GM12878 (cell line): ENCODE measurements at regions of chr1 and their contacts with region 1.

Region 1: DNA sequence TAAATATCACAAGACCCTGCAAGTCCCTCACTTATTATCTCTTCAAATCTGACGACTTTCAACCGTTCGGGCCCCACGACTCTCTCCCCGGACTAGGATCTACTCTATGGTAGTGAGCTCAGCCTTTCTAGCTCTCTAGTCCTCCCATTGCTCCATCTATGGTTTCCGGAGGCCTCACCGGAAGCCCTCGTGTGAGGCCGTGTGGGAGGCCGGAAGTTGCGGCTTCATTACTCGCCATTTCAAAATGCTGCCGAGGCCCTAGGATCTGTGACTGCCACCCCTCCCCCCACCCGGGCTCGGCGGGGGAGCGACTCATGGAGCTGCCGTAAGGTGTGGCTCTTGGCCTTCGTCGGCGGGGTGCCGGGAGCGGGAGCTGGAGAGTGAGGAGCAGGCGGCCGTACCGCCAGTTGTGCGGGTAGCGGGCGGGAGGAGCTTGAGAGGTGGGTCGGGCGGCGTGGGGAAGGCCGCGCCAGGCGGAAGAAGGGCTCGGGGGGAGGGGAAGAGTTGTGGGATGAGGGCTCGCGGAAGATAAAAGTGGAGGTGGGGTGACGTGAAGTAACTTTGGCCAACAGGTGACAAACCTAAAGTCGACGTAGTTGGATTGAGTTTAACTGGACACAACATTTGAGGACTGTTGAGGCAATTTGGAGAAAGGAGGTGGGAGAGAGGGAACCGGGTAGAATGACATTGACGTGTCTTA is at the start of gene MDM4:
- DNase-seq: peak; percentile 90
- ATAC-seq: peak; percentile 86
- H3K4me3 ChIP-seq: peak within 1 kb of the TSS; percentile 90
- H3K27ac ChIP-seq: peak within 1 kb of the TSS; percentile 81
- H3K4me1 ChIP-seq: peaks cover 44% of the 10 kb centered on the region
- H3K27me3 ChIP-seq: no peaks in the 10 kb centered on the region
- CTCF ChIP-seq: no peak
- EP300 ChIP-seq: peak in 1 of 2 experiments; percentile 70; a peak in 1 of 4 replicates
- POLR2A ChIP-seq: peak; percentile 94
- RAD21 ChIP-seq: no peak
- polyA plus RNA-seq, gene MDM4: 2.5 to 11.5 TPM

Region 2: GRCh38 chr1:203290261-203291089 is 1225.9 kb before region 1 on chr1:
- CTCF ChIA-PET with region 1: no interaction called
- POLR2A ChIA-PET with region 1: no interaction called
- RAD21 ChIA-PET with region 1: no interaction called
- SMC1A ChIA-PET with region 1: no interaction called
- in situ Hi-C with region 1: loop called (anchors 25 kb)
- intact Hi-C with region 1: no loop called
- DNase-seq: no peak
- ATAC-seq: peak; percentile 72
- H3K4me3 ChIP-seq: peak overlapping the region; percentile 65
- H3K27ac ChIP-seq: peak overlapping the region; percentile 100
- H3K4me1 ChIP-seq: peaks cover 58% of the 10 kb centered on the region
- H3K27me3 ChIP-seq: no peaks in the 10 kb centered on the region
- CTCF ChIP-seq: no peak
- EP300 ChIP-seq: peak; percentile 42 to 60; a peak in 3 of 4 replicates
- POLR2A ChIP-seq: peak; percentile 86
- RAD21 ChIP-seq: no peak

Region 3: DNA sequence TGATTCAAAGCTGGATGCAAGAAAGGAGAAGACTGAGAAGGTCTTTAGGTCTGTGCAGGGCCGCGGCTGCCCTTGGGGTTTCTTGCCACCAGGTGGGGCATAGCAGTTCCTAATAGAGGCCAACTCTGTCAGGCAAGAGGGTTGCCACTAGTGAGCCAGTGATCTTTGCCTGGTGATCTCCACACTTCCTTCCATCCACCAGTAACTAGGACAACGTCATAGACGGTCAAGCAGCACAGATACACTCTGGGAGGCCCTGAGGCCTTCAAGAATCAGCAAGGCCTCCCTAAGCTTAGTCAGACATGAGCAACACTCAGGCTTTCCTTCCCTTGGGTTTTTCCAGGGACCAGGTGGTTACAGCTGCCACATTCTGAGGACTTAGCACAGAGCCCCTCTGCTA is 922.6 kb before region 1 on chr1:
- CTCF ChIA-PET with region 1: no interaction called
- POLR2A ChIA-PET with region 1: no interaction called
- RAD21 ChIA-PET with region 1: no interaction called
- SMC1A ChIA-PET with region 1: no interaction called
- in situ Hi-C with region 1: no loop called
- intact Hi-C with region 1: no loop called
- DNase-seq: no peak
- ATAC-seq: peak; percentile 91
- H3K4me3 ChIP-seq: no peak overlapping the region
- H3K27ac ChIP-seq: no peak overlapping the region
- H3K4me1 ChIP-seq: no peaks in the 10 kb centered on the region
- H3K27me3 ChIP-seq: peaks cover 1 to 3% of the 10 kb centered on the region in 2 experiments; a peak in 1 of 4 replicates
- CTCF ChIP-seq: peak; percentile 39 to 54 (median 49); a peak in 5 of 6 replicates
- EP300 ChIP-seq: no peak
- POLR2A ChIP-seq: no peak
- RAD21 ChIP-seq: peak; percentile 41

Region 4: GRCh38 chr1:204207136-204207616 is 309.2 kb before region 1 on chr1:
- CTCF ChIA-PET with region 1: no interaction called
- POLR2A ChIA-PET with region 1: no interaction called
- RAD21 ChIA-PET with region 1: no interaction called
- SMC1A ChIA-PET with region 1: no interaction called
- in situ Hi-C with region 1: no loop called
- intact Hi-C with region 1: no loop called
- DNase-seq: no peak
- ATAC-seq: peak; percentile 98
- H3K4me3 ChIP-seq: no peak overlapping the region
- H3K27ac ChIP-seq: no peak overlapping the region
- H3K4me1 ChIP-seq: no peaks in the 10 kb centered on the region
- H3K27me3 ChIP-seq: peaks cover 0 to 8% of the 10 kb centered on the region in 2 experiments; a peak in 2 of 4 replicates
- CTCF ChIP-seq: peak; percentile 79 to 94 (median 90)
- EP300 ChIP-seq: no peak
- POLR2A ChIP-seq: no peak
- RAD21 ChIP-seq: peak; percentile 52

Region 5: DNA sequence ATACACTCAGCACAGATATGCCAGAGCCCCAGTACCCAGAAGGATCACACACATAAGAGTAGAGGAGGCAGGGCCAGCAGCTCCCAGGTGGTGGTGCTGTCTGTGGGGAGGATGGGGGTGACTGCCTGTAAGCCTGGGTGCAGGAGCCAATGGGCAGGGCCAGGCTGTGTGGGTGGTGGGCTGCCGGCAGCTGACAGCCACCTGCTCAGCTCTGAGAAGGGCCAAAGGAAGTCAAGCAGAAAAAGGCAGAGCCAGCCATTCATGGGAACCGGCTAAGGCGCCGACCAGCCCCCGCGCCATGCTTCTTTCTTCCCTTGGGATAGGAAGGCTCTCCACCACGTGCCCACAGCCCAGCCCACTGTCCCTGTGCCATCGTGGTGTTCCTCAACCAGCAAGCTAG is 35.8 kb before region 1 on chr1:
- CTCF ChIA-PET with region 1: interaction called, 10 read pairs
- POLR2A ChIA-PET with region 1: interaction called, 9 read pairs
- RAD21 ChIA-PET with region 1: interaction called, 4 read pairs
- SMC1A ChIA-PET with region 1: interaction called, 6 read pairs
- in situ Hi-C with region 1: no loop called
- intact Hi-C with region 1: no loop called
- DNase-seq: no peak
- ATAC-seq: peak; percentile 81
- H3K4me3 ChIP-seq: no peak overlapping the region
- H3K27ac ChIP-seq: peak overlapping the region; percentile 84
- H3K4me1 ChIP-seq: peaks cover 45% of the 10 kb centered on the region
- H3K27me3 ChIP-seq: no peaks in the 10 kb centered on the region
- CTCF ChIP-seq: peak; percentile 20 to 24 (median 23); a peak in 2 of 6 replicates
- EP300 ChIP-seq: no peak; a peak in 1 of 4 replicates
- POLR2A ChIP-seq: no peak
- RAD21 ChIP-seq: peak; percentile 39; the same call in 1 of the 2 replicates

Region 6: GRCh38 chr1:204499521-204500468 is 16.5 kb before region 1 on chr1:
- CTCF ChIA-PET with region 1: interaction called, 18 read pairs
- POLR2A ChIA-PET with region 1: interaction called, 31 read pairs
- RAD21 ChIA-PET with region 1: interaction called, 8 read pairs
- SMC1A ChIA-PET with region 1: interaction called, 64 read pairs
- in situ Hi-C with region 1: no loop called
- intact Hi-C with region 1: no loop called
- DNase-seq: no peak
- ATAC-seq: no peak
- H3K4me3 ChIP-seq: no peak overlapping the region
- H3K27ac ChIP-seq: no peak overlapping the region
- H3K4me1 ChIP-seq: peaks cover 10% of the 10 kb centered on the region
- H3K27me3 ChIP-seq: no peaks in the 10 kb centered on the region
- CTCF ChIP-seq: no peak
- EP300 ChIP-seq: no peak
- POLR2A ChIP-seq: no peak
- RAD21 ChIP-seq: no peak

Region 7: DNA sequence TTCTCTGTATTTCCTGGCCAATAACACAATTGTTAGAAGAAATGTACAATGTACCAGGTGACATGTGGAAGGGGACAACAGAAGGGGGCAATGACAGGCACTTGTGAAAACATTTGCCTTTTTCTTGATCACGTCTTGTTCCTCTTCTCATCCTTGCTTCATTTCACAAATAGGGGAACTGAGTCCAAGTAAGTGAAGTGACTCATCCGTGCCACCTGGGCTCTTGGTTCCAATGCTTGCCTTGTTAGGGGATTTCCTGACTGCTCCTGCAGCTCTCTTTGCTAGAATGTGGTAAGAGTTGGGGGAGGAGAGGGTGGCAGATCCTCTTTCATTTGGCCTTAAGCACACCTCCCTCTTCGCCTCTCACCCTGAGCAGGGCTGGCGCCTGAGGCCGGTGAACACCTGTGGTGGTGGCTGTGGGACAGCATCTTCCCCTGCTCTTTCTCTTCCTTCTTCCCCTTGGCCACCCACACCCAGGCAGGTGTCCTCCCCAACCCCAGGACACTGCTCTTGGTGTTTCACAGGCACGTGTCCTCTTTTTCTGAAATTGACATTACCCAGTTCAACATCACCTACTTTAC is 1534.4 kb after region 1 on chr1:
- CTCF ChIA-PET with region 1: no interaction called
- POLR2A ChIA-PET with region 1: no interaction called
- RAD21 ChIA-PET with region 1: no interaction called
- SMC1A ChIA-PET with region 1: no interaction called
- in situ Hi-C with region 1: no loop called
- intact Hi-C with region 1: loop called (anchors 10 kb)
- DNase-seq: peak; percentile 100
- ATAC-seq: peak; percentile 88
- H3K4me3 ChIP-seq: no peak overlapping the region
- H3K27ac ChIP-seq: peak overlapping the region; percentile 91
- H3K4me1 ChIP-seq: peaks cover 53% of the 10 kb centered on the region
- H3K27me3 ChIP-seq: no peaks in the 10 kb centered on the region
- CTCF ChIP-seq: 0 out of 6 replicates have a peak, but pooled peaks of 1 of the 3 experiments have one; percentile 3
- EP300 ChIP-seq: peak; percentile 97 to 98
- POLR2A ChIP-seq: peak; percentile 69
- RAD21 ChIP-seq: 0 out of 2 replicates have a peak, but pooled peaks have one; percentile 15